ENCODE measurements at regions of chr2 and their contacts with region 1.

Region 1: DNA sequence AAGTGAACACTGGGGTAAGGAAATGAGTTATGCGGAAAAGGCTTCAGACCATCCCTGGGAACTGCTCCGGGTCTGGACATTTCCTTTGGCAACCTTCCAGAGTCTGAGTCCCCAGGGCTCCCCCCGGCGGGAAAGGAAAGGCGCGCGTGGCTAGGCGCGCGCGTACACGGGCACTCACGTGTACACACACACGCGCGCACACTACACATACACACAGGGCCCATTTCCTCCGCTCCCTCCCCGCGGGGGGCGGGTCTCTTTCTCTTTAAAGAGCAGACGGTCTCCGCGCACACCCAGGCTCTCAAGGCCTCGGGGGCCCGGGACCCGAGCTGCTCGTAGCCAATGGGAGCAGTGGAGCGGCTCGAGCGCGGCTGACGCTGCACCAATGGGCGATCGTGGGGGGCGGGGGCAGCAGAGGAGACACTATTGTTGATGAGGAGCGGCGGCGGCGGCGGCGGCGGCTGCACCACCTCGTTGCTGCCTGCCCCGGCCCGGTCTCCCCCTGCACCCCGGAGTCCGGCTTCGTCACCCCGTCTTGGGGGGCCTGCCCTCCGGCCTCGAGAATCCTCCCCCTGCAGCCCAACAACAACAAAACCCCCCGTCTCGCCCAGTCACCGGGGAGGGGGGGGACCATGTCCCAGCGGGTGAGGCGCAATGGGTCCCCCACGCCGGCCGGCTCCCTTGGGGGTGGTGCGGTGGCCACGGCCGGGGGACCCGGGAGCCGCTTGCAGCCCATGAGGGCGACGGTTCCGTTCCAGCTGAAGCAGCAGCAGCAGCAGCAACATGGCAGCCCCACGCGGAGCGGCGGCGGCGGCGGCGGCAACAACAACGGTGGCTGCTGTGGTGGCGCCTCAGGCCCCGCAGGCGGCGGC is at the start of gene FAM117B:
- DNase-seq: peak; percentile 97
- H3K4me3 Mint-ChIP-seq: peak within 1 kb of the TSS; percentile 94
- H3K27ac Mint-ChIP-seq: peak within 1 kb of the TSS; percentile 96
- H3K4me1 Mint-ChIP-seq: peaks cover 40% of the 10 kb centered on the region
- H3K27me3 Mint-ChIP-seq: no peaks in the 10 kb centered on the region
- total RNA-seq, gene FAM117B: 8.3 and 9.2 TPM in 2 replicates

Region 2: GRCh38 chr2:202375609-202376408 is 259.0 kb before region 1 on chr2 and contains the start of gene BMPR2:
- intact Hi-C with region 1: loop called (anchors 5 kb)
- DNase-seq: peak; percentile 81
- H3K4me3 Mint-ChIP-seq: peak within 1 kb of the TSS; percentile 96
- H3K27ac Mint-ChIP-seq: peak within 1 kb of the TSS; percentile 73
- H3K4me1 Mint-ChIP-seq: peaks cover 24% of the 10 kb centered on the region
- H3K27me3 Mint-ChIP-seq: peaks cover 13% of the 10 kb centered on the region
- total RNA-seq, gene BMPR2: 10.0 and 11.3 TPM in 2 replicates

Region 3: DNA sequence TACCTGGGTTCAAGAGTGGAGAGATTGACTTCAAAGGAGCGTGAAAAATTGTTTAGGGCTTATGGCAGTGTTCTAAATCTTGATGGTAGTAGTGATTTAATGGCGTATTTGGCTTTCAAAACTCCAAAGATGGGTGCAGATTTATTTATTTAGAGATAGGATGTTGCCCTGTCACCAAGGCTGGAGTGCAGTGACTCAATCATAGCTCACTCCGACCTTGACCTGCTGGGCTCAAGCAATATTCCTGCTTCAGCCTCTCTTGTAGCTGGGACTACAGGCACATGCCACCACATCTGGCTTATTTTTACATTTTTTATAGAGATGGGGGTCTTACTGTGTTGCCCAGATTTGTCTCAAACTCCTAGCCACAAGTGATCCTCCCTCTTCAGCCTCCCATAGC is 52.5 kb after region 1 on chr2:
- intact Hi-C with region 1: no loop called
- DNase-seq: no peak
- H3K4me3 Mint-ChIP-seq: no peak overlapping the region
- H3K27ac Mint-ChIP-seq: no peak overlapping the region
- H3K4me1 Mint-ChIP-seq: peaks cover 8% of the 10 kb centered on the region
- H3K27me3 Mint-ChIP-seq: no peaks in the 10 kb centered on the region

Region 4: GRCh38 chr2:202762556-202762955 is 127.8 kb after region 1 on chr2:
- intact Hi-C with region 1: loop called (anchors 5 kb)
- DNase-seq: no peak
- H3K4me3 Mint-ChIP-seq: peak overlapping the region; percentile 28
- H3K27ac Mint-ChIP-seq: peak overlapping the region; percentile 75
- H3K4me1 Mint-ChIP-seq: peaks cover 32% of the 10 kb centered on the region
- H3K27me3 Mint-ChIP-seq: no peaks in the 10 kb centered on the region

Region 5: GRCh38 chr2:202911512-202912341 is 276.9 kb after region 1 on chr2 and contains the starts of genes CARF and WDR12:
- intact Hi-C with region 1: loop called (anchors 2 kb)
- DNase-seq: peak; percentile 89
- H3K4me3 Mint-ChIP-seq: peak within 1 kb of the TSS; percentile 95
- H3K27ac Mint-ChIP-seq: peak within 1 kb of the TSS; percentile 98
- H3K4me1 Mint-ChIP-seq: peaks cover 26% of the 10 kb centered on the region
- H3K27me3 Mint-ChIP-seq: no peaks in the 10 kb centered on the region
- total RNA-seq, gene CARF: 4.6 and 5.0 TPM in 2 replicates
- total RNA-seq, gene WDR12: 128 and 139 TPM in 2 replicates

Region 6: DNA sequence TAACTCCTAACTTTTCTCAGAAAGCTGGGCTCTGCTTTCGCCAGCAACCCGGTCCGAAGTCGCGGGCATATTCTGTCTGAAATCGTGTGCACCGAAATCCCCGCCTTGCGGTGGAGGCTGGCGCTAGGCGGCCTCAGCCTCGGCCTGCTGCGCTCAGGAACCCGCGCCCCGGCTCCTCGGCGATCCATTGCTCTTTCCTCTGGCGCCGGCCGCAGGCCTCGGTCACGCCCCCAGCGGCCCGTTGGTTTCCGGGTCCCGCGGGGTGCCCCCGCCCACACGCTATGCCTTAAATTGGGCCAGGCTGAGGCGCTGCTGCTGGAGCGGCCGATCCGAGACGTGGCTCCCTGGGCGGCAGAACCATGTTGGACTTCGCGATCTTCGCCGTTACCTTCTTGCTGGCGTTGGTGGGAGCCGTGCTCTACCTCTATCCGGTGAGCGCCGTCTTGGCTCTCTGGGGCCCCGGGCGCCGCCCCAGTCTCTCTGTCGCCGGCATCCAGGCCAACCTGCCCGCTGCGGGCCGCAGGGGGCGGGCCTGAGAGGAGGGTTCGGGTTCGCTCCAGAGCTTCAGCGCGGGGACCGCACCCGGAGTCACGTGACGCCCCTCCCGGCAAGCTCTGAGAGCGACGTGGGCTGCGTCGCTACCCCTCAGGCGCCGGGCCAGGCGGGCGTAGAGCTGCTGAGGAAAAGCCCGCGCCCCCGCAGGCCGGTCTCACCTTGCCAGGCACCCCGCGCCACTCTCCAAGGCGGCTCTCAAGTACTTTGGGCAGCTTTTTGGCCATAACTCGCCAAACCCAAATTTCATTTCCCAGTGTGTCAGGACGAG is 604.1 kb after region 1 on chr2 and contains the start of gene CYP20A1:
- intact Hi-C with region 1: loop called (anchors 1 kb)
- DNase-seq: peak; percentile 96
- H3K4me3 Mint-ChIP-seq: peak within 1 kb of the TSS; percentile 91
- H3K27ac Mint-ChIP-seq: peak within 1 kb of the TSS; percentile 100
- H3K4me1 Mint-ChIP-seq: peaks cover 18% of the 10 kb centered on the region
- H3K27me3 Mint-ChIP-seq: no peaks in the 10 kb centered on the region
- total RNA-seq, gene CYP20A1: 21.0 and 23.2 TPM in 2 replicates